IMR-90 (cell line): ENCODE measurements at regions of chr15 and their contacts with region 1.

Region 1: DNA sequence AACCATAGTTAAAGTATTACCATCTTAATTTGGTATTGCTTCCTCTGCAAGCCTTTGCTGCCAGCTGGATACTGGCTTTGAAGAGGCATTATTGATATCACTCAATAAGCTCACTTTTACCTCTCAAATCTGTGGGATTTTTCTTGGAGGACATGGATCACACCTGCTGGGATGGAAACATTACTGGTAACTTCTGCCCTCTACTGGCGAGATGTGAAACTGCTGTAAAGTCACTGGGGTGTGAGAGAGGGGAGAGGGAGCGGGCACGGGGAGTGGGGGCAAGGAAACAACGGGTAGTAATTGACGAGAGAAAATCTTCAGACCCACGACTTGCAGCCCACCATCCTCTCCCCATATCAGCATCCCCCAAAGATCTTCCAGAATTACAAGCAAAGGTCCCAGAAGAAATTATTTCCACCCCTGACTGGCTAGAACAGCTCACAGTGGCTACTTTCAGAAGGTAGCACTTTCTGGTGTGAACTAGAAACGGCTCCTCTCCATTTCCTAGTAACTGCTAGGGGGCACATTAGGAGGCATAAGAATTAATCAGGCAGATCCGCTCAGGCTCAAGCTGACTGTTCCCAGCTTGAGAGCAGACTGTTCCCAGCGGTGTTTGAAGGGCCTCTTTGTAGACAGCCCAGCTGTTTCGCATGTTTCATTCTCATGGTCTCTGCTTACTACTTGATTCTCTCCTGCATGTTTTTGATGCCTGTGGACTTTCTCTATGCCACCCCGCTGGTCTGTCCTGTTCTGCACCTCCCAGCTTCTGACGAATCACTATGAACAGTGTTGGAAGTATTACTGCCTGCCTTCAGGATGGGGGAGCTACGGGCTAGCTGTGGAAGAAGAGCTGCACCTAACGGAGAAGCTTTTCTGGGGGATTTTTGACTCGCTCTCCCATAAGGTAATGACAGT is 230.4 kb upstream of the CHRM5 start:
- DNase-seq: peak; percentile 23
- ATAC-seq: peak; percentile 81
- H3K4me3 ChIP-seq: no peak overlapping the region
- H3K27ac ChIP-seq: no peak overlapping the region
- H3K4me1 ChIP-seq: no peaks in the 10 kb centered on the region
- H3K27me3 ChIP-seq: peaks cover 18% of the 10 kb centered on the region
- CTCF ChIP-seq: peak; percentile 62
- POLR2A ChIP-seq: no peak
- RAD21 ChIP-seq: peak; percentile 51

Region 2: DNA sequence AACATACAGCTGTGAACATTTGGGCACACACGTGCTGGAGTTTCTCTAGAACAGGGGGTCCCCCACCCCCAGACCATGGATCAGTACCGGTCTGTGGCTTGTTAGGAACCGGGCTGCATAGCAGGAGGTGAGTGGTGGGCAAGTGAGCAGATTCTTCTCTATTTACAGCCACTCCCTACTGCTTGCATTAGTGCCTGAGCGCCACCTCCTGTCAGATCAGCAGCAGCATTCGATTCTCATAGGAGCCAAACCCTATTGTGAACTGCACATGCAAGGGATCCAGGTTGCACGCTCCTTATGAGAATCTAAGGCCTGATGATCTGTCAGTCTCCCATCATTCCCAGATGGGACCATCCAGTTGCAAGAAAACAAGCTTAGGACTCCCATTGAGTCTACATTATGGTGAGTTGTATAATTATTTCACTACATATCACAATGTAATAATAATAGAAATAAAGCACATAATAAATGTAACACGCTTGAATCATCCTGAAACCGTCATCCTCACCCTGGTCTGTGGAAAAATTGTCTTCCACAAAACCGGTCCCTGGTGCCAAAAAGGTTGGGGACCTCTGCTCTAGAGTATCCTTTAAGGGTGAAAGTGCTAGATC is 256.2 kb after region 1 on chr15:
- CTCF ChIA-PET with region 1: interaction called, 4 read pairs
- POLR2A ChIA-PET with region 1: no interaction called
- dilution Hi-C with region 1: no loop called
- in situ Hi-C with region 1: no loop called
- intact Hi-C with region 1: loop called (anchors 1 kb)
- DNase-seq: peak; percentile 51
- ATAC-seq: peak; percentile 91
- H3K4me3 ChIP-seq: no peak overlapping the region
- H3K27ac ChIP-seq: no peak overlapping the region
- H3K4me1 ChIP-seq: no peaks in the 10 kb centered on the region
- H3K27me3 ChIP-seq: no peaks in the 10 kb centered on the region
- CTCF ChIP-seq: peak; percentile 60
- POLR2A ChIP-seq: no peak
- RAD21 ChIP-seq: peak; percentile 72